SK-N-SH (cell line): ENCODE measurements at regions of chr19 and their contacts with region 1.

Region 1: GRCh38 chr19:6218491-6219162 is 61.1 kb downstream of the MLLT1 start:
- DNase-seq: peak; percentile 97
- H3K4me3 ChIP-seq: peak overlapping the region in 1 of 2 experiments; percentile 9; a peak in 1 of 4 replicates
- H3K27ac ChIP-seq: peak overlapping the region in 1 of 2 experiments; percentile 51; a peak in 2 of 4 replicates
- H3K4me1 ChIP-seq: peaks cover 0 to 45% of the 10 kb centered on the region in 2 experiments; a peak in 1 of 4 replicates
- H3K27me3 ChIP-seq: no peaks in the 10 kb centered on the region
- CTCF ChIP-seq: peak; percentile 87
- EP300 ChIP-seq: no peak
- RAD21 ChIP-seq: peak; percentile 93

Region 2: GRCh38 chr19:6103217-6103644 is 115.4 kb before region 1 on chr19:
- CTCF ChIA-PET with region 1: no interaction called
- POLR2A ChIA-PET with region 1: no interaction called
- DNase-seq: no peak
- H3K4me3 ChIP-seq: no peak overlapping the region
- H3K27ac ChIP-seq: peak overlapping the region; percentile 67 to 95; a peak in 3 of 4 replicates
- H3K4me1 ChIP-seq: peaks cover 16 to 20% of the 10 kb centered on the region in 2 experiments
- H3K27me3 ChIP-seq: no peaks in the 10 kb centered on the region
- CTCF ChIP-seq: no peak
- EP300 ChIP-seq: peak in 1 of 2 experiments; percentile 67; a peak in 1 of 4 replicates
- RAD21 ChIP-seq: no peak

Region 3: DNA sequence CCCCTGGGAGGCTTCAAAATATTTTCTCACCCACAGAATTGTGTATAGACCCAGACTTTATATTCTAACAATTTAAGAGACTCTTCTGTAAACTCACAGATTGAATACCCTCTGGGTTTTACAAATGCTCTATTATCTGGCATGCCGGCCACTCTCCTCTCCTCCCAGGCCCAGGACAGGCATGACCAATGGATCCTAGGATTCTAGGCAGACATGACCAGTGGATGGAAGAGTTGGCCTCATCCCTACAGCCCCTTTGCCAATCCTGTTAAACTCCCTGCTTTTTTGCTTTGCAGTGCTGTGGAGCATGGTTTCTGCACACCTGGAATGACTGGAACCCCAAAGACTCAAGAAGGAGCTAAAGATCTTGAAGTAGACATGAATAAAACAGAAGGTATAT is 77.4 kb before region 1 on chr19:
- CTCF ChIA-PET with region 1: no interaction called
- POLR2A ChIA-PET with region 1: no interaction called
- DNase-seq: no peak
- H3K4me3 ChIP-seq: no peak overlapping the region
- H3K27ac ChIP-seq: no peak overlapping the region
- H3K4me1 ChIP-seq: no peaks in the 10 kb centered on the region
- H3K27me3 ChIP-seq: no peaks in the 10 kb centered on the region
- CTCF ChIP-seq: no peak
- EP300 ChIP-seq: no peak
- RAD21 ChIP-seq: no peak

Region 4: GRCh38 chr19:6204212-6204611 is 14.4 kb before region 1 on chr19:
- CTCF ChIA-PET with region 1: interaction called, 10 read pairs
- POLR2A ChIA-PET with region 1: no interaction called
- DNase-seq: no peak
- H3K4me3 ChIP-seq: no peak overlapping the region
- H3K27ac ChIP-seq: no peak overlapping the region
- H3K4me1 ChIP-seq: peaks cover 0 to under 1% of the 10 kb centered on the region in 2 experiments; a peak in 1 of 4 replicates
- H3K27me3 ChIP-seq: no peaks in the 10 kb centered on the region
- CTCF ChIP-seq: no peak
- EP300 ChIP-seq: no peak
- RAD21 ChIP-seq: no peak

Region 5: DNA sequence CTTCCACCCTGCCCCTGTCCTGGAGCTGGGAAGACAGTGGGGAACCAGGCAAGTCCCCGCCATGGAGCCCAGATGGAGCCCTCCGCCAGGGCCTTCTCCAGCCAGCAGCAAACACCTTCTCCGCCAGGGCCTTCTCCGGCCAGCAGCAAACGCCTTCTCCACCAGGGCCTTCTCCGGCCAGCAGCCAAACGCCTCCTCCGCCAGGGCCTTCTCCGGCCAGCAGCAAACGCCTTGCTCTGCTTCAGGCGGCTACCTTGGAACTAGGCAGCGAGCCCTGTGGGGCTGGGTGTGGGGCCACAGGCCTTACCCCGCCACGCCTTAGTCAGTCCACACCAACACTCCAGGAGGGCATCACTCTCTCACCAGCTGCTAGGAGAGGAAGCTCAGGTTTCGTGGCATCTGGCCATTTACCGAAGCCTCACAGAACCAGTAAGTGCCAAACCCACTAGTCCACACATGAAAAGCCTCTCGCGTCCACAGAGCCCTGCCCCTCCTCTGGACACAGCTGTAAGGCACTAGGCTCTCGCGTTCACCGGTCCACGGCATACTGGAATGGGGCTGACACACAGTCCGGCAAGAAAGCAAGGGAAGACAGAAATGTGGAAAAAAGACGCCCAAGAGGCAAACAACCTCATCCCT is 20.1 kb after region 1 on chr19:
- CTCF ChIA-PET with region 1: interaction called, 42 read pairs
- POLR2A ChIA-PET with region 1: interaction called, 4 read pairs
- DNase-seq: no peak
- H3K4me3 ChIP-seq: no peak overlapping the region; a peak in 1 of 4 replicates
- H3K27ac ChIP-seq: peak overlapping the region; percentile 20 to 94; a peak in 3 of 4 replicates
- H3K4me1 ChIP-seq: peaks cover 11 to 91% of the 10 kb centered on the region in 2 experiments; a peak in 2 of 4 replicates
- H3K27me3 ChIP-seq: no peaks in the 10 kb centered on the region
- CTCF ChIP-seq: no peak
- EP300 ChIP-seq: no peak
- RAD21 ChIP-seq: no peak

Region 6: DNA sequence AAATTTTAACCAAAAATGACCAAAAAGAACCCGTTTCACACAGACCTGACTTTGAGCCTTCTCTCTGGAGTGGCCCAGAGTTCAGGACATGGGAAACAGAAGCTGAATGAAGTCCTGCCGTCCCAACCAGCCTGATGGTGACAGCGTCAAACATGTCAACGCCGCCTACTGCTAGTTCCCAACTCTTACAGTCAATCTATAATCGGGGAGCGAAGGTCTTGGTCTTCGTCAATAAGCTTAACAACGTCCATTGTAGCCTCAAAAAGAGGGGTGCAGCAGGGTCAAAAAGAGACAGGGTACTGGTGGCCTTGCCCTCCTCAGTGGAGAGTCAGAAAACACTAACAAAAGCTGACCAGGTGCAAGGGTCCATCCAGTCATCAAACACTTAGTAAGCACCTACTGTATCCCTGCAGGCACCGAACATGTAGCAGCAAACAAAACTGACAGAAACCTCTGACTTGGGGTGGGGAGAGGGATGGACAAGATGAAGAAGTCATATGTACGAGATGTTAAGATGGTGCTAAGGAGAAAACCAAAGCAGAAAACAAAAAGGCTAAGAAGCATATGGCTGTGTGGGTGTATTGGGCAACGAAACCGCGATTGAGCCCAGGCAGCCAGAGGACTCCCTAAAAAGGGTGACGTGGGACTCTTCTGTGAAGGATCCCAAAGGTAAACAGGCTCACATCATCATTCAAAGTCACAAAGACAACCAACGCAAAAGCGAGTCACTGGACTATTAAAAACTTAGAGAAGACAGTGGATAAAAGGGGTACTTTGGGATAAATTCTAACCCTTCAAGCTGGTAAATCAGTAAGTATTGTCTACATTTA is 49.1 kb after region 1 on chr19:
- CTCF ChIA-PET with region 1: interaction called, 52 read pairs
- POLR2A ChIA-PET with region 1: no interaction called
- DNase-seq: no peak
- H3K4me3 ChIP-seq: no peak overlapping the region
- H3K27ac ChIP-seq: no peak overlapping the region
- H3K4me1 ChIP-seq: peaks cover 22 to 37% of the 10 kb centered on the region in 2 experiments
- H3K27me3 ChIP-seq: no peaks in the 10 kb centered on the region
- CTCF ChIP-seq: no peak
- EP300 ChIP-seq: no peak
- RAD21 ChIP-seq: no peak

Region 7: DNA sequence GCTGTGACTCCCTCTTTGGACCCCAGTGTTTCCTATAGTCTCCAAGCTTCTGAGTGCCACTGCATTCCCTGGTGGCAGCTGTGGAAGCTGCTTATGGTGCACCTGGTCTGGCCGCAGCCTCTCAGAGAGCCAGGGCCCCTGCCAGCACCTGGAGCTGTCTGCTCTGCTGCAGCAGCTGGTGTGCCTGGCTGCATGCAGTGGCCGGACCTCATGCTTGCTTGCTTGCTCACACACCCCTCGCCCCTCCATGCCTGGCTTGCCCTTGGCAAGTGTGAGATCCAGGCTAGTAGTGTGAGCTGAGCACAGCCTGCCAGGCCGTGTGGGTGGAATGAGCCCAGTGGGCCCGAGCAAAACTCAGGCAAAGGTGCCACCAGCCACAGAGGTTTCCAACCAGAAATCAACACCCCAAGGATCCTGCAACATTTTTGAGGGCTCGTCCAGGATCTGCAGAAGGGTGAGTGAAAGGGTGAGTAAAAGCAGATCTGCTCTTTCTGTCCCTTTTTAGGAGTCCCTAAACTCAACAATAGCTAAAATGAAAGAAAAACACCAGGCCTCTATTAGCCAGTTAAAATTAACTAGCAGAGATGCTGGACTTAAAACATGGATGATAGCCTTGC is 68.8 kb after region 1 on chr19:
- CTCF ChIA-PET with region 1: interaction called, 13 read pairs
- POLR2A ChIA-PET with region 1: no interaction called
- DNase-seq: no peak
- H3K4me3 ChIP-seq: no peak overlapping the region; a peak in 1 of 4 replicates
- H3K27ac ChIP-seq: no peak overlapping the region
- H3K4me1 ChIP-seq: no peaks in the 10 kb centered on the region
- H3K27me3 ChIP-seq: no peaks in the 10 kb centered on the region; the same call in 1 of the 2 replicates
- CTCF ChIP-seq: no peak
- EP300 ChIP-seq: no peak
- RAD21 ChIP-seq: no peak

Region 8: GRCh38 chr19:6312018-6312417 is 93.4 kb after region 1 on chr19:
- CTCF ChIA-PET with region 1: interaction called, 11 read pairs
- POLR2A ChIA-PET with region 1: no interaction called
- DNase-seq: no peak
- H3K4me3 ChIP-seq: no peak overlapping the region
- H3K27ac ChIP-seq: no peak overlapping the region
- H3K4me1 ChIP-seq: no peaks in the 10 kb centered on the region
- H3K27me3 ChIP-seq: peaks cover 28% of the 10 kb centered on the region; the same call in 1 of the 2 replicates
- CTCF ChIP-seq: no peak
- EP300 ChIP-seq: no peak
- RAD21 ChIP-seq: peak; percentile 42